ENCODE measurements at regions of chr15 and their contacts with region 1.

Region 1: GRCh38 chr15:28886431-28887338 is 911 bp downstream of the APBA2 start:
- DNase-seq: no peak
- ATAC-seq: peak; percentile 18
- H3K4me3 ChIP-seq: peak overlapping the region; percentile 75
- H3K27ac ChIP-seq: peak overlapping the region; percentile 83; the same call in 1 of the 3 replicates
- H3K4me1 ChIP-seq: peaks cover 21 to 42% of the 10 kb centered on the region in 2 experiments
- H3K27me3 ChIP-seq: no peaks in the 10 kb centered on the region
- CTCF ChIP-seq: no peak
- EP300 ChIP-seq: no peak
- POLR2A ChIP-seq: no peak
- RAD21 ChIP-seq: no peak

Region 2: DNA sequence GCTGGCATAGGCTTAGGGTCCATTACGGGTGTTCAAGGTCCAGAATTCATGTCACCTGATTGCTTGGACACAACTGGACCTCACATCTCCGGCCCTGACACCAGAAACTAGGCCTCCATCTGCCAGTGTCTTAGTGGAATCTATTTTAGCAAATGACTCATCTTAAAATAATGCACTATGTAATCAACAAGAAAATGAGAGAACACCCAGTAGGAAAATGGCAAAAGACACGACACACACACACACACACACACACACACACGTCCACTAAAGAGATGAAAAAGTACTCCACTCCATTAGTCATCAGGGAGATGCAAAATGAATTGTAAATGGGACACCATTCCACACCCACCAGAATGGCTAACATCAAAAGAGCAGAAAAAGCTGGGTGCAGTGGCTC is 10.3 kb after region 1 on chr15:
- CTCF ChIA-PET with region 1: no interaction called
- POLR2A ChIA-PET with region 1: interaction called, 14 read pairs
- in situ Hi-C with region 1: no loop called
- intact Hi-C with region 1: no loop called
- DNase-seq: no peak
- ATAC-seq: no peak
- H3K4me3 ChIP-seq: no peak overlapping the region
- H3K27ac ChIP-seq: no peak overlapping the region
- H3K4me1 ChIP-seq: peaks cover 17 to 36% of the 10 kb centered on the region in 2 experiments; a peak in 4 of 5 replicates
- H3K27me3 ChIP-seq: no peaks in the 10 kb centered on the region
- CTCF ChIP-seq: no peak
- EP300 ChIP-seq: no peak
- POLR2A ChIP-seq: no peak
- RAD21 ChIP-seq: no peak

Region 3: GRCh38 chr15:28975766-28976179 is 89.1 kb after region 1 on chr15:
- CTCF ChIA-PET with region 1: no interaction called
- POLR2A ChIA-PET with region 1: no interaction called
- in situ Hi-C with region 1: no loop called
- intact Hi-C with region 1: no loop called
- DNase-seq: peak; percentile 74 to 79 (median 78)
- ATAC-seq: peak; percentile 88
- H3K4me3 ChIP-seq: no peak overlapping the region
- H3K27ac ChIP-seq: no peak overlapping the region
- H3K4me1 ChIP-seq: peaks cover 5% of the 10 kb centered on the region in 2 experiments
- H3K27me3 ChIP-seq: no peaks in the 10 kb centered on the region
- CTCF ChIP-seq: peak; percentile 87 to 93 (median 92)
- EP300 ChIP-seq: no peak
- POLR2A ChIP-seq: no peak
- RAD21 ChIP-seq: peak; percentile 70 to 89